OCI-LY7 (cell line): ENCODE measurements at regions of chr21 and their contacts with region 1.

Region 1: GRCh38 chr21:42956819-42957632 is 17.3 kb upstream of the PKNOX1 start:
- DNase-seq: no peak
- H3K4me3 ChIP-seq: no peak overlapping the region
- H3K27ac ChIP-seq: no peak overlapping the region
- H3K4me1 ChIP-seq: no peaks in the 10 kb centered on the region
- CTCF ChIP-seq: no peak

Region 2: DNA sequence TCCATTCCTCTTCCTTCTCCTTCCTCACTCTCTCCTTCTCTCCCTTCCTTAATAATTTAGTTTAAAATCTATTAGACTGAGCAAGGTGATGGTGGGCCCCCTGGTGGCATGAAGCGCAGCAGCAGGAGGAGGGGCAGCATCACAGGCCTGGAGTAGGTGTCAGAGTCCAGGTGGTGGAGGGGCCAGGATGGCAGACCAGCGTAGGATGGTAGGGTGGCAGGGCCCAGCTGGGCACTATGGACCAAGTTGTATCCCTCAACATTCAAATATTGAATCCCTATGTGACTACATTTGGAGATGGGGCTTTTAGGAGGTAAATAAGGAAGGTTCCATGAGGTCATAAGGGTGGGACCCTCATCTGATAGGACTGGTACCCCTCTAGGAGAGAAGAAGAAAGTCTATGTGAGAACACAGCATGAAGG is 138.7 kb before region 1 on chr21:
- CTCF ChIA-PET with region 1: no interaction called
- POLR2A ChIA-PET with region 1: no interaction called
- intact Hi-C with region 1: no loop called
- DNase-seq: peak; percentile 41
- H3K4me3 ChIP-seq: no peak overlapping the region
- H3K27ac ChIP-seq: no peak overlapping the region
- H3K4me1 ChIP-seq: no peaks in the 10 kb centered on the region
- CTCF ChIP-seq: peak; percentile 89

Region 3: DNA sequence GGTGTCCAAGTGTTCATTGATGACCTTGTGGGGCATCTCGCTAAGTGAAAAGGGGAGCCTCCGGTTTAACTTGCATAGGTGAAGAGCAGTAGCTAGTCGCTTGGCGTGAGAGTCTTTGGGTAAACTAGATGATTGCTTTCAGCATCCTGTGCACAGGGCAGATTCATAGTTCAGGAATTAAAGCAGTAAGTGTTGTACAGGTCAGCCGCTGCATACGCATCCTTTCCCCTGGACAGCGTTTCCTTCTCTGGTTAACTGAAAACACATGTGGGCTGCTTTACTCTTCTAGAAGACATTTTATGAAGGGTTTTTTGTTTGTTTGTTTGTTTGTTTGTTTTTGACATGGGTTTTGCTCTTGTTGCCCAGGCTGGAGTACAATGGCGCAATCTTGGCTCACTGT is 51.8 kb before region 1 on chr21:
- CTCF ChIA-PET with region 1: no interaction called
- POLR2A ChIA-PET with region 1: no interaction called
- intact Hi-C with region 1: loop called (anchors 10 kb)
- DNase-seq: no peak
- H3K4me3 ChIP-seq: no peak overlapping the region
- H3K27ac ChIP-seq: no peak overlapping the region
- H3K4me1 ChIP-seq: no peaks in the 10 kb centered on the region
- CTCF ChIP-seq: no peak